Heart right ventricle (tissue), 16 donors: ENCODE measurements at regions of chr5 and their contacts with region 1.

Region 1: DNA sequence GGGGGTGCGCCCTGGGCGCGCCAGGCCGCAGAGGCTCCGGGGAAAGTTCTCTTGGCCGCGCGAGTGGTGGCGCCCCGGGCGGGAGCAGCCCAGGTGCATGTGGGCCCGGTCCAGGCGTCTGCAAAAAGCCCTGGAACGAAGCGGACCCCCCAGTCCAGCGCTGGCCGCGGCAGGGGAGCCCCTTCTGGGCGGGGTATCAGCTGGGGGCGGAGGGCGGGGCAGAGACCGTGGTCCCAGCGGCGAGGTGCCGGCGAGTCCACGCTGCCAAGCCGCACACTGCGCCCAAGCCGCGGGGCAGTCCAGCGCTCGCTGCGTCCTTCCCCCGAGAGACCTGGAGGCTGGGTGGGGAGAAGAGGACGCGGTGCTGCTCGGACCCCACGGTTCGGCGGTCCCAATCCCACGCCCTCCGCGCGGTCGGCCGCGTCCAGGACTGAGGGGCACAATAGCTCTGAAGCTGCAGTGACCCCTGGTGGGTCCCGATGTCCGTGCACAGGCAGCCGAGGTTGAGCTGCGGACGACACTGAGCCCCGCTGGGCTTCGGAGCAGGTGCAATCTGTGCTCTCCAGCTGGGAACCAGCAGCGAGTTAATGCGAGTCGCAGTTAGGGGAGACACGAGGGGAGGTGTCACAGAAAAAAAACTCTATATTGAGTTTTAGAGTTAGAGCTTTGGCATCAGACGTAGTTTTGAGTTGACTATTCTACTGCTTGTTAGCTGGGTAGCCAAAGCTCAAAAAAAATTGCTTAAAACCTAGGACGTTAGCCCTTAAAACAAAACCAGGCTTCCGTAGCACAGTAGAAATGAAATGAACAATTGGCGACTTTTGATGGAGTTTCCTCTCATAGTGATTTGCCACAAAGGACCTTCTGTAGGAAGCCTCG is 1.1 kb upstream of the EPB41L4A start:
- DNase-seq: peak; percentile 86 to 87
- ATAC-seq: peak; percentile 89 to 96 (median 92)
- H3K4me3 ChIP-seq: peak overlapping the region; percentile 52 to 95 (median 87)
- H3K27ac ChIP-seq: peak overlapping the region; percentile 78 to 97 (median 92)
- H3K4me1 ChIP-seq: peaks cover 4 to 46% (median 22%) of the 10 kb centered on the region in 9 donors
- H3K27me3 ChIP-seq: peaks cover 0 to 51% (median 0%) of the 10 kb centered on the region in 7 donors
- CTCF ChIP-seq: peak; percentile 87 to 99 (median 94)

Region 2: DNA sequence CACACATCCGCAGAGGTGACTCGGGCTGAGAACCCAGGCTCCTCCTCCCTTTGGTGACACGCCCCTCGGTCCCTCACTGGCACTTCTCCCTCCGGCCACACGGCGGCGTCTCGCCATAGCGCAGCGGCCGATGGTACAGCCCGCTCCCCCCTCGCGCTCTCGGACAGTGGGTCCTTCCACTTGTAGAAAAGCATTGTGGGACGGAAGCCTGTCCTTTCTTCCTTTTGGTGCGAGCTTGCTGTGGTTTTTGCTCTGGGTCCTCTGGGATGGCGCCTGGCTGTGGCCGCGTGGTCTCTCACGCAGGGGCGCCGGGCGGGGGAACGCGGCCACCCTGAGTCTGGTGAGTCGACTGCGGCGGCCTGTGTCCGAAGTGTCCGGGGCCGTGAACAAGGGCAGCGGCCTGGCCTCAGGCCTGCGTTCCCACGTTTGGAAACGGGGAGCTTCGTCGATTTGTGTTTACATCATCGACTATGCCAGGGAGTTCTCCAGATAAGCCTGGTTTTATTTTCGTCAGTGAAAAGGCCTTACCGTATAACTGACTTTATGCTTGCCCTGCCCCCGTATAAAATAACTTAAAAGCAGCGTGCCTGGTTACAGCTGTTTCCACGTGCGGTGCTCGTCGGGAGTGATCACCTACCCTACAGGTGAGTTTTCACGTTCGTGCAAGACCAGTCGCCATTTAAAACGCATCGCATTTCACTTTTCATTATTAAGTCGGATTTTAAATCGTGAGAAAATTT is 259.4 kb before region 1 on chr5:
- intact Hi-C with region 1: loop called in 1 of 10 experiments (anchors 2 kb)
- DNase-seq: peak; percentile 91 to 92
- ATAC-seq: peak; percentile 91 to 97 (median 94)
- H3K4me3 ChIP-seq: peak overlapping the region; percentile 65 to 98 (median 81)
- H3K27ac ChIP-seq: peak overlapping the region; percentile 66 to 95 (median 90)
- H3K4me1 ChIP-seq: peaks cover 5 to 30% (median 27%) of the 10 kb centered on the region in 9 donors
- H3K27me3 ChIP-seq: no peaks in the 10 kb centered on the region
- CTCF ChIP-seq: peak; percentile 89 to 99 (median 95)

Region 3: DNA sequence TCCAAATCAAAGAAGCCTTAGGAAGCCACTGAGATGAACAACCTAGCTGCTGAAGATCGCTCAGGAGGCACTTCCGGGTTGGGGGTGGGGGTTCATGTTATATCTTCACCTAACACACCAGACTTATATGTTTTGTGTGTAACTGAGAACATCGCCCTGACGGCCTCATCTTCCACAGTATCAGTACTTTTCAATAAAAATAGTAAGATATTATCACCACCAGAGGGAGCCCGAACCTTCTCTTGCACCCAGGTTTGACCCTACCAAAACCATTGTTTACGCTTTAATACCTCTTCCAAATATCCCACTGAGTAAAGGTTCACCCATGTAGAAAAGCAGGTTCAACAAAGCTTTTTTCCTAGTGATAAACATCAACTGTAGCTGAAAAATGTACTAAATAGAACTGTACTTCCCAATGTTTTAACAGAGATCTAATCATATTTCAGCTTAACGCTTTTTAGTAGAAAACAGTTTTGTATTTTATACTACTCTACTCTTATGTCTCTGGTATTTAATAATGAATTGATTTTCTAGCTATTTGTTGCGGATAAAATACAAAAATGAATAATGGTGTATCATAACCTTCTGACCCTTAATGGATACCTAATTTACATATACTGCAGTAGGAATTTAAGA is 245.1 kb before region 1 on chr5:
- intact Hi-C with region 1: loop called in 8 of 10 experiments (anchors 1 to 5 kb)
- DNase-seq: peak in 1 of 2 donors; percentile 40
- ATAC-seq: peak; percentile 46 to 78 (median 65)
- H3K4me3 ChIP-seq: no peak overlapping the region
- H3K27ac ChIP-seq: no peak overlapping the region
- H3K4me1 ChIP-seq: peaks cover 0 to 6% (median 0%) of the 10 kb centered on the region in 9 donors
- H3K27me3 ChIP-seq: no peaks in the 10 kb centered on the region
- CTCF ChIP-seq: peak; percentile 45 to 87 (median 69)

Region 4: GRCh38 chr5:112210430-112211005 is 209.7 kb before region 1 on chr5:
- intact Hi-C with region 1: loop called in 9 of 10 experiments (anchors 1 to 10 kb)
- DNase-seq: peak in 1 of 2 donors; percentile 49
- ATAC-seq: peak in 6 of 8 donors; percentile 52 to 68 (median 62)
- H3K4me3 ChIP-seq: no peak overlapping the region
- H3K27ac ChIP-seq: no peak overlapping the region
- H3K4me1 ChIP-seq: peaks cover 0 to 9% (median 3%) of the 10 kb centered on the region in 9 donors
- H3K27me3 ChIP-seq: no peaks in the 10 kb centered on the region
- CTCF ChIP-seq: peak; percentile 39 to 77 (median 63)

Region 5: GRCh38 chr5:112253478-112254250 is 166.6 kb before region 1 on chr5:
- intact Hi-C with region 1: loop called in 1 of 10 experiments (anchors 5 kb)
- DNase-seq: peak in 1 of 2 donors; percentile 61
- ATAC-seq: peak; percentile 67 to 98 (median 94)
- H3K4me3 ChIP-seq: no peak overlapping the region
- H3K27ac ChIP-seq: peak overlapping the region in 7 of 10 donors; percentile 30 to 65 (median 39)
- H3K4me1 ChIP-seq: peaks cover 3 to 40% (median 26%) of the 10 kb centered on the region in 9 donors
- H3K27me3 ChIP-seq: no peaks in the 10 kb centered on the region
- CTCF ChIP-seq: no peak

Region 6: GRCh38 chr5:112329419-112330090 is 90.7 kb before region 1 on chr5:
- intact Hi-C with region 1: loop called in 2 of 10 experiments (anchors 5 to 10 kb)
- DNase-seq: no peak
- ATAC-seq: peak in 7 of 8 donors; percentile 13 to 44 (median 40)
- H3K4me3 ChIP-seq: no peak overlapping the region
- H3K27ac ChIP-seq: peak overlapping the region in 3 of 10 donors; percentile 13 to 46 (median 21)
- H3K4me1 ChIP-seq: peaks cover 3 to 62% (median 44%) of the 10 kb centered on the region in 9 donors
- H3K27me3 ChIP-seq: no peaks in the 10 kb centered on the region
- CTCF ChIP-seq: no peak

Region 7: DNA sequence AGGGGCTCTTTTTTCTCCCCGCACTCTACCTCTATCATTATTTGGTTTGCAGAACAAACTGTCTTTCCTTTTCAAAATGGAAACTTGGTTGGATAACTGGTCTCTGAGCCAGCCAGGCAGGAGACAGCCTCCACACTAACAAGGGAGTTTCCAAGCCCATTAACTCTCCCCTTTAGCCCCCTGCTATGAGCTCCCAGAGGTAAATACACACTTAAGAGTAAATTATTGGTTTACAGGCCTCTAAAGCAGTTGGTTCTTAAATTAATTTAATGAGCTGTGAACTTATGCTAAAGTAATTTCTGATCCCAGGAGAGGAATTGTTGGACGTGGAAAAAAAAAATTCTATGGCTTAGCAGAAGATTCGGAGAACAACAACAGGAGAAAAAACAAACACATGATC is 31.5 kb before region 1 on chr5:
- intact Hi-C with region 1: no loop called
- DNase-seq: no peak
- ATAC-seq: no peak
- H3K4me3 ChIP-seq: no peak overlapping the region
- H3K27ac ChIP-seq: peak overlapping the region in 2 of 10 donors; percentile 25 to 33
- H3K4me1 ChIP-seq: peaks cover 0 to 46% (median 10%) of the 10 kb centered on the region in 9 donors
- H3K27me3 ChIP-seq: no peaks in the 10 kb centered on the region
- CTCF ChIP-seq: no peak